ENCODE measurements at regions of chr12 and their contacts with region 1.

Region 1: DNA sequence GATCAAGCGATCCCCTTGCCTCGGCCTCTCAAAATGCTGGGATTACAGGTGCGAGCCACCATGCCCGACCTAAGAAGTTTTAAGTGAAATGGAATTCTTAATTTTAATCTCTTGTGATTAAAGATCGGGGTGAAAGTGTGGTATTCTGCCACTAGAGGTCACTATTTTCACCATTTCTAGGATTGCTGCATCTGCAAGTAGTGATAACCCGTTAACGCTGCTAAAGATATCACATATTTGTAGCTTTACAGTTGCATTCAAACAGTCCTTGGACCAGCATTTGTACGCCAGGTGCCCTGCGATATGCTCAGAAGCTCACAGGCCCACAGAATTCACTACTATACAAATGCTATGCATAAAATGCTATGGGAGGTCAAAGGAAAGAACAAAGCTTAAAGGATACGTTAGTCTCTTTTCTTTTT is 19.3 kb downstream of the CCDC62 start:
- DNase-seq: peak; percentile 11
- H3K4me3 Mint-ChIP-seq: no peak overlapping the region
- H3K27ac Mint-ChIP-seq: no peak overlapping the region
- H3K4me1 Mint-ChIP-seq: no peaks in the 10 kb centered on the region
- H3K27me3 Mint-ChIP-seq: no peaks in the 10 kb centered on the region

Region 2: GRCh38 chr12:121916719-121917118 is 877.0 kb before region 1 on chr12:
- CTCF ChIA-PET with region 1: no interaction called
- intact Hi-C with region 1: no loop called
- DNase-seq: no peak
- H3K4me3 Mint-ChIP-seq: no peak overlapping the region
- H3K27ac Mint-ChIP-seq: no peak overlapping the region
- H3K4me1 Mint-ChIP-seq: peaks cover 21% of the 10 kb centered on the region
- H3K27me3 Mint-ChIP-seq: no peaks in the 10 kb centered on the region

Region 3: DNA sequence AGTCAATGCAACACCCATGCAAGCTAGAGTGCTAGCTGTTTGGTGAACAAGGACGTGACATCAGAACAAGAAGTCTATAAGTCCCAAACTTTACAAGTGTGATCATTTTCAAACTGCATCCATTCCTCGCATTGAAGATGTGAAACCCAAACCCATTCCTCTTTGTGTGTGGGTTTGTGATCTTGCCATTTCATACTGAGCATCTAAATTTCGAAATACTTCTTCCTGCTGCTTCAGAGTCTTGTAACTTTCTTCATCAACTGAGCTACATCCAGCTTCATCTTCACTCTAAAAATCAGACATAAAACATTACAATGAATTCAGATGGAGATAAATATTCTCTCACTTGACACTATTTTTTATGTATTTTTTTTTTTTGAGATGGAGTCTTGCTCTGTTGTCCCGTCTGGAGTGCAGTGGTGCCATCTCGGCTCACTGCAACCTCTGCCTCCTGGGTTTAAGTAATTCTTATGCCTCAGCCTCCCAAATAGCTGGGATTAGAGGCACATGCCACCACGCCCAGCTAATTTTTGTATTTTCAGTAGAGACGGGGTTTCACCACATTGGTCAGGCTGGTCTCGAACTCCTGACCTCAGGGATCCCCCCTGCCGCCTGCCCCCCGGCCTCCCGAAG is 288.2 kb before region 1 on chr12:
- CTCF ChIA-PET with region 1: no interaction called
- intact Hi-C with region 1: no loop called
- DNase-seq: no peak
- H3K4me3 Mint-ChIP-seq: no peak overlapping the region
- H3K27ac Mint-ChIP-seq: no peak overlapping the region
- H3K4me1 Mint-ChIP-seq: peaks cover 18% of the 10 kb centered on the region
- H3K27me3 Mint-ChIP-seq: no peaks in the 10 kb centered on the region

Region 4: GRCh38 chr12:122825773-122826724 is 32.4 kb after region 1 on chr12:
- CTCF ChIA-PET with region 1: interaction called, 16 read pairs
- intact Hi-C with region 1: no loop called
- DNase-seq: no peak
- H3K4me3 Mint-ChIP-seq: peak overlapping the region; percentile 34
- H3K27ac Mint-ChIP-seq: no peak overlapping the region
- H3K4me1 Mint-ChIP-seq: peaks cover 2% of the 10 kb centered on the region
- H3K27me3 Mint-ChIP-seq: no peaks in the 10 kb centered on the region

Region 5: GRCh38 chr12:122834104-122834920 is 40.6 kb after region 1 on chr12:
- CTCF ChIA-PET with region 1: interaction called, 12 read pairs
- intact Hi-C with region 1: loop called (anchors 1 kb)
- DNase-seq: peak; percentile 19
- H3K4me3 Mint-ChIP-seq: peak overlapping the region; percentile 87
- H3K27ac Mint-ChIP-seq: peak overlapping the region; percentile 62
- H3K4me1 Mint-ChIP-seq: peaks cover 22% of the 10 kb centered on the region
- H3K27me3 Mint-ChIP-seq: peaks cover 2% of the 10 kb centered on the region

Region 6: GRCh38 chr12:122860346-122861090 is 66.8 kb after region 1 on chr12:
- CTCF ChIA-PET with region 1: interaction called, 6 read pairs
- intact Hi-C with region 1: loop called (anchors 1 kb)
- DNase-seq: peak; percentile 91
- H3K4me3 Mint-ChIP-seq: no peak overlapping the region
- H3K27ac Mint-ChIP-seq: no peak overlapping the region
- H3K4me1 Mint-ChIP-seq: no peaks in the 10 kb centered on the region
- H3K27me3 Mint-ChIP-seq: no peaks in the 10 kb centered on the region

Region 7: DNA sequence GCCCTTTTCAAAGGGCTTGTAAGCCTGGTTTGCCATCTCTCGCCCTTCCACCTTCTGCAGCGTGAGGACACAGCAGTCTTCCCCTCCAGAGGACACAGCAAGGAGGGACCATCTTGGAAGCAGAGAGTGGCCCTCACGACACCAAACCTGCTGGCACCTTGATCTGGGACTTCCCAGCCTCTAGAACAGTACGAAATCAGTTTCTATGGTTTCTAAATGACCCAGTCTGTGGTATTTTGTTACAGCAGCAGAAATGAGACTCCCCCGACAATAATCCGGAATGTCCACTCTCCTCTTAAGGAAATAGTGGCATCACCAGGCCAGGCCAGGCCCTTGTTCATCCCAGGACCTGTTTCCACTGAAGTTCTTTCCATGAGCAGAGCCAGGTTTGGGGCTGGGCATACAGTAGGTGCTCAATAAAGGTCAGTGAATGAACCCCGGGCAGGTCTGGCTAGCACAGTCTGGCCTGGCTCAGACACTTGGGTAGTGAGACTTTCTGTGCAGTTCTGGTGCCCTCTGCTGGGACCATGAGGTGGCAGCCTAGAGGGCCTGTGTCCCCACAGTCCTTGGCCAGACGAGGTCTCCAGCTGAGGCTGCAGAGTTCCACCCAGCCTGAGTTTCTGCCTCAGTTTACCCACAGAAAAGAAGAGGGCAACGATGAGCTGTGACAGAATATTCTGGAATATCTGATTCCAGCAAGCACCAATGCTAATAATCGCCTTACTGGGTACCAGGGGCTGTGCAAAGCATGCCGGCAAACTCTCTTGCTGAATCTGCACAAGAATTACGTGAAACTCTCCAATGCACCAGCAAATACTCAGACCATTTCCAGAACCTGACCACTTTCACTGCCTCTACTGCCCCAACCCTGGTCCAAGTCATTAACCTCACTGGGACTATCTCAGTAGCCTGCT is 158.5 kb after region 1 on chr12:
- CTCF ChIA-PET with region 1: interaction called, 15 read pairs
- intact Hi-C with region 1: loop called (anchors 1 kb)
- DNase-seq: peak; percentile 87
- H3K4me3 Mint-ChIP-seq: no peak overlapping the region
- H3K27ac Mint-ChIP-seq: no peak overlapping the region
- H3K4me1 Mint-ChIP-seq: peaks cover 6% of the 10 kb centered on the region
- H3K27me3 Mint-ChIP-seq: no peaks in the 10 kb centered on the region